ENCODE measurements at regions of chr15 and their contacts with region 1.

Region 1: GRCh38 chr15:44195151-44195740 is at the start of gene FRMD5:
- DNase-seq: peak; percentile 95
- H3K4me3 Mint-ChIP-seq: peak within 1 kb of the TSS; percentile 72
- H3K27ac Mint-ChIP-seq: no peak within 1 kb of the TSS
- H3K4me1 Mint-ChIP-seq: peaks cover 10% of the 10 kb centered on the region
- H3K27me3 Mint-ChIP-seq: no peaks in the 10 kb centered on the region
- CTCF ChIP-seq: peak; percentile 37
- total RNA-seq, gene FRMD5: 0.71 and 0.98 TPM in 2 replicates

Region 2: GRCh38 chr15:44207643-44208042 is 12.4 kb after region 1 on chr15:
- CTCF ChIA-PET with region 1: interaction called, 4 read pairs
- POLR2A ChIA-PET with region 1: interaction called, 12 read pairs
- intact Hi-C with region 1: no loop called
- DNase-seq: peak; percentile 41
- H3K4me3 Mint-ChIP-seq: no peak overlapping the region
- H3K27ac Mint-ChIP-seq: peak overlapping the region; percentile 24
- H3K4me1 Mint-ChIP-seq: peaks cover 8% of the 10 kb centered on the region
- H3K27me3 Mint-ChIP-seq: no peaks in the 10 kb centered on the region
- CTCF ChIP-seq: no peak